ENCODE measurements at regions of chr16 and their contacts with region 1.

Region 1: DNA sequence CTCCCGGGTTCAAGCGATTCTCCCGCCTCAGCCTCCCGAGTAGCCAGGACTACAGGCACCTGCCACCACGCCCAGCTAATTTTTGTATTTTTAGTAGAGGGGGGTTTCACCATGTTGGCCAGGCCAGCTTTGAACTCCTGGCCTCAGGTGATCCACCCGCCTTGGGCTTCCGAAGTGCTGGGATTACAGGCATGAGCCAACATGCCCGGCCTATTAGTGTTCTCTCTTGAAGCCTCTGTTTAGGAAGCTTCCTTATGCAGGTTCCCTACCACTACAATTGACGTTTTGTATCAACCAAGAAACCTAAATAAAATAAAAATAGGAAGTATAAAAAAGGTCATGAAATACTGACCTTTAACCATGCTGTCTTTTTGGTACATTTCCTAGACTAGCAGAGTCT is 16.0 kb downstream of the CHST5 start:
- DNase-seq: no peak
- H3K4me3 ChIP-seq: no peak overlapping the region
- H3K27ac ChIP-seq: no peak overlapping the region
- H3K4me1 ChIP-seq: peaks cover 5% of the 10 kb centered on the region
- H3K27me3 ChIP-seq: no peaks in the 10 kb centered on the region
- CTCF ChIP-seq: no peak
- POLR2A ChIP-seq: no peak

Region 2: DNA sequence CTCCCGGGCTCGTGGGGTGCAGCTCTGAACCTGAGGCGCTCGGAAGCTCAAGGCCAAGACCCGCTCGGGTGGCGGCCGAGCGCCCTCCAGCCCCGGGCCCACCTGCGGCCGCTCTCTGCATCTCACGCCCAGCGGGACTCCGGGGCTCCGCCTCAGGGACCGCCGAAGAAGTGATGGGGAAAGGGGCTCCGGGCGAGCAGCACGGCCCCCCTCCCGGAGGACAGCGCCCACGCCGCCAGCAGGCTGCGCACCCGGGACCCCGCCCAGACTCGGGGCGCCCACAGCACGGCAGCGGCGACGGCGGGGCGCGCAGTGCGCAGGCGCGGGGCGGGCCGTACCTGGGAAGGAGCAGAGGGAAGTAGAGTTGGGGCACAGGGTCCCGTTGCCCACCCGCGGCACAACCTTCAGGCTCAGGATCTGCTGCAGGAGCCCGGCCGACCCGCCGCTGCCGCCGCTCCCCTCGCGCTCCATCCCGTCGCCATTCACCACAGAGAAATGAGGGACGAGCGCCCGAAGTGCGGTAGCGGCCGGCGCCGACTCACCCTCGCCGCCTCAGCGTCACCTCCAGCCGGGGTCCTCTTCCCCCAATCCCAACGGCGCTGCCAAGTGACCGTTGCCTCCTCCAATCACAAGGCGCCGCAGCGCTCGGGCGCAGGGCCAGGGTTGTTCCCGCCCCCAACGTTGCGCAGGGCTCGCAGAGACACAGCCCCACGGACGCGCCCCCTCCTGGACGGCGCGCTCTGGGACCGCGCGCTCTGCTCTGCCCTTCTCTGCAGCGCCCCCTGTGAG is 55.6 kb before region 1 on chr16 and contains the start of gene TMEM170A:
- CTCF ChIA-PET with region 1: interaction called, 31 read pairs
- POLR2A ChIA-PET with region 1: no interaction called
- dilution Hi-C with region 1: no loop called
- intact Hi-C with region 1: loop called (anchors 2 kb)
- DNase-seq: peak; percentile 100
- H3K4me3 ChIP-seq: peak within 1 kb of the TSS; percentile 65 to 93 (median 68)
- H3K27ac ChIP-seq: peak within 1 kb of the TSS; percentile 74
- H3K4me1 ChIP-seq: peaks cover 10% of the 10 kb centered on the region
- H3K27me3 ChIP-seq: no peaks in the 10 kb centered on the region
- CTCF ChIP-seq: peak; percentile 100
- POLR2A ChIP-seq: peak; percentile 98
- total RNA-seq, gene TMEM170A: 22.2 and 24.2 TPM in 2 replicates

Region 3: DNA sequence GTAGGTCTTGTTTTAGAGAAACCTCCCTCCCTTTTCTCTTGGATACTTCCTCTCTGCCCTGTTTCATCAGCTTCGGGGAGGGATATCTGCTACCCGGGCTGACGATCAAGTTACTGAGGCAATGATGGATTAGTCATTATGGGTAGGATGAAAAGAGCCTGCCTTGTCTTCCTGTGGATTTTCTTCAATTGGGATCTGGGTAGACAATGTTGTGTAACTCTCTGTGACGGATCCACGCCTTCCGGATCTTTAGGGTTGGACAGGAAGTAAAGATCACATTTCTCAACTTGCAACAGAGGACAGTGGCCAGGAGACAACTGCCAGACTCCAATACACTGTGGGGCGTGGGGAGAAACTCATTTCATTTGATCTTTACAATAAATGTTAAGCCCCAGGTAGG is 13.3 kb before region 1 on chr16:
- CTCF ChIA-PET with region 1: interaction called, 16 read pairs
- POLR2A ChIA-PET with region 1: no interaction called
- dilution Hi-C with region 1: no loop called
- intact Hi-C with region 1: no loop called
- DNase-seq: no peak
- H3K4me3 ChIP-seq: no peak overlapping the region
- H3K27ac ChIP-seq: no peak overlapping the region
- H3K4me1 ChIP-seq: peaks cover 6% of the 10 kb centered on the region
- H3K27me3 ChIP-seq: no peaks in the 10 kb centered on the region
- CTCF ChIP-seq: no peak
- POLR2A ChIP-seq: no peak

Region 4: DNA sequence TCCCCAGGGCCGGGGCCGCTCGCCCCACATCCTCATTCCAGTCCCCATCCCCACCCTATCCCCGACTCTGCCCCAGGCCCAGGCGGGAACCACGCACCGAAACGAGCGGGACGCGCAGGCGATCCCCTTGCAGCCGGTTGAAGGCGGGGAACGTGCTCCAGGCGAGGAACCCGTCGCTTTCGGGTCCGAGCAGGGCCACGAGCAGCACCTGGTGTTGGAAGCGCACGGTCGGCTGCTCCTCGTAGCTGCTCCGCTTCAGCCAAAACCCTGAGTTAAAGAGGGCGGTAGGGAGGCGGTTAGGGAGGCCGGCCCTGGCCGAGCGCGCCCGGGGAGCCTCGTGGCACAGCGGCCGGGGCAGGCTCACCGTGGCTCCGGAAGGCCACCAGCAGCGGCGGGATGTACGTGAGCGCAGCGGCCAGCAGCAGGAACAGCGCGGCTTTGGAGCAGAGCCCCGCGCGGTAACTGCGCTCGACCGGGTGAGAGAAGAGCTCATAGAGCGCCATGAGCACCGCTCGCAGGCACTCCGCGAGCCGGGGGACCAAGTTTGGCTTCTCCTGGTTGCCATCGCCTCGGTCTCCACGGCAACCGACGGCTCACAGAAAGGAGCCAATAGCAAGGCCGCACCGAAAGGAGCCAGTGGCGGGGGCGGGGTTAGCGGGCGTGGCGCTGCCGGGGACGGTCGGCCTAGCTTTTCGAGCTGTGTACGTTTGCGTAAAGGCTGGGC is 36.0 kb after region 1 on chr16 and contains the start of gene TMEM231:
- CTCF ChIA-PET with region 1: interaction called, 15 read pairs
- POLR2A ChIA-PET with region 1: interaction called, 3 read pairs
- dilution Hi-C with region 1: no loop called
- intact Hi-C with region 1: loop called (anchors 1 kb)
- DNase-seq: peak; percentile 91
- H3K4me3 ChIP-seq: peak within 1 kb of the TSS; percentile 75 to 86 (median 80)
- H3K27ac ChIP-seq: peak within 1 kb of the TSS; percentile 46
- H3K4me1 ChIP-seq: peaks cover 12% of the 10 kb centered on the region
- H3K27me3 ChIP-seq: peaks cover 9 to 14% of the 10 kb centered on the region in 2 experiments
- CTCF ChIP-seq: no peak
- POLR2A ChIP-seq: no peak
- total RNA-seq, gene TMEM231: 9.4 and 10.0 TPM in 2 replicates

Region 5: GRCh38 chr16:75622761-75623605 is 103.1 kb after region 1 on chr16 and contains the start of gene ADAT1:
- CTCF ChIA-PET with region 1: interaction called, 8 read pairs
- POLR2A ChIA-PET with region 1: no interaction called
- dilution Hi-C with region 1: no loop called
- intact Hi-C with region 1: loop called (anchors 1 kb)
- DNase-seq: peak; percentile 99
- H3K4me3 ChIP-seq: peak within 1 kb of the TSS; percentile 49 to 96 (median 94)
- H3K27ac ChIP-seq: peak within 1 kb of the TSS; percentile 75
- H3K4me1 ChIP-seq: peaks cover 24% of the 10 kb centered on the region
- H3K27me3 ChIP-seq: no peaks in the 10 kb centered on the region
- CTCF ChIP-seq: no peak
- POLR2A ChIP-seq: peak; percentile 95
- total RNA-seq, gene ADAT1: 56.6 and 57.9 TPM in 2 replicates